KBM-7 (cell line): ENCODE measurements at regions of chr2 and their contacts with region 1.

Region 1: DNA sequence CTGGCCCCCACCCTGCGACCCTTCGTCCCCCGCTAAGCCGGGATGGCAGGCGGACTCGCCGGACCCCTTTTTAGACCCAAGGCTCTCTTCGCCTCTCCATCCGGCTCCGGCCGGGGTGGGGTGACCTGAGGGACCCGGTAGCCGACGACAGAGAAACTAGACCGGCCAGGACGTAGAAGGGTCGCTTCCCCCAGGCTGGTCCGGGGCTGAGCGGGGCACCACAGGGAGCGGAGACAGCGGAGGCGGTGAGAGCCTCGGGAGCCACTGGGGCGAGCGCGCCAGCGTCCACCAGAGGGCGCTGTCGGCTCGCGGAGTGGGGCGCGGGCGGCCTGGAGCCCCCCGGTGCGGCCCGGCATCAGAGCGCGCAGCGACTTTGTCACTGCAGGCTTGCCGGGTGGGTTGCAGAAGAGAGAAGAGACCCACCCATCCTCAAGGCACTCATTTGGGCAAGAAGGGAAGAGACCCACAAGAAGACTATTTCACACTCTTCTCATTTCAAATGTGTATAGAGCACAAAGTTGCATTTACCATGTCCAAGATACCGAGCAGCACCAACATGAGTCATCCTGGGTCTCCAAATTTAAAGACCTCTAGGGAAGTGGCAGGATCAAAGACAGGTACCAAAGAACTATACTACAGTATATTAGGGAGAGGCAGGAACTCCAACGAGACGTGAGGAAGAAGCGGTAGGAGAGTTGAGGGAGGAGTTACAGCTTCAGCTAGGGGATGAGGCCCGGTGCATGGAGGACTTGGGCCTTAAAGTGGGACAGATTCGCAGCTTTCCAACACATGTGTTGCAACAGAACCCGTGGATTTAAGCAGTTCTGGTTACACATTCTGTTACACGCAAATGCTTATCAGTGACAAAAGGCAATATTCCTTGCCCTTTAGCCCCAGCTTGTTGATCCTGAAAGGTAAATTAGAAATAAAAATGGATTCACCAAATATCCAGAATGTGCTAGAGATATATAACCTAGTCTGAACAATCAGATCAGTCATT is 7.6 kb upstream of the PRKCE start:
- DNase-seq: peak; percentile 76

Region 2: DNA sequence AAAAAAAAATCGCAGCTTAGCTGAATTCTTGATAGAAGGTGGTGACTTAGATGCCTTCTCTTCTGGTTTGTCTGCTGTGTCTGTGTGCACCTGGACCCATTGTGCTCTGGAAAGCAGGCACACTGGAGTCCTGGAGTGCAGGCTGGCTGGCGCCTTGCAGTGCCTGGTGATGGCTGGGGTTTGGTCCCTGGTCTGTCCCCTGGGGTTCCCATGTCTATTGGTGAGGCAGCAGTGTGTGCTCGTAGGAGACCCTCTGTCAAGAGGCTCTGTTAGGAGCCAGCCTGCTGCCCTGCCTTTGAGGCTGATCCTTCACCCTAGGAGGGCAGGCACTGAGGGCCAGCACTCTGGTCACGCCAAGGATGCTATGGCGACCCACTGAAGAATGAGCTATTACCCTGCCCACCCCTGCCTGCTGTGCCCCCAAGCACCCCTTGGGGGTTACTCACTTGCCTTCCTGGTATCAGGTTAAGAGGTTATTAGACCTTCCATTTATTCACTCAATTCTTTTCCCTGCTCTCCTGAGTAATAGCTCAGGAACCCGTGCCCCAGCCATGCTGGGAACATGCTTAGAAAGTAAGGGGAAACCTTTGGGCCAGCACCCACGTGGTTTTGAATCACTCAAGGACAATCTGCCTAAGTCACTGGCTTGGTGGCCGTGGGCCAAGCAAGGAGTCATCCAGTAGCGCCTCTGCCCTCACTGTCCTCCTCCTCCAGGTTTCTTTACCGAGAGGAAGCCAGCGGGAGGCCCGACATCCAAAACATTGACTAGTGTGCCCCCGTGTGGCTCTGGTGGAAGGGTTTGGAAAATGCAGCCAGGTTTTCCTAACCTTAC is 292.2 kb after region 1 on chr2:
- in situ Hi-C with region 1: loop called (anchors 25 kb)
- DNase-seq: peak; percentile 89